ENCODE measurements at regions of chr7 and their contacts with region 1.

Region 1: GRCh38 chr7:11831736-11832495 is at the start of gene THSD7A:
- DNase-seq: peak; percentile 56
- ATAC-seq: peak; percentile 95
- H3K4me3 ChIP-seq: peak within 1 kb of the TSS; percentile 76
- H3K27ac ChIP-seq: no peak within 1 kb of the TSS
- H3K4me1 ChIP-seq: no peaks in the 10 kb centered on the region
- H3K27me3 ChIP-seq: no peaks in the 10 kb centered on the region
- CTCF ChIP-seq: no peak
- total RNA-seq, gene THSD7A: 0.04 and 0.06 TPM in 2 replicates

Region 2: GRCh38 chr7:11373546-11374142 is 458.3 kb before region 1 on chr7:
- CTCF ChIA-PET with region 1: no interaction called
- POLR2A ChIA-PET with region 1: no interaction called
- intact Hi-C with region 1: loop called (anchors 5 kb)
- DNase-seq: peak; percentile 54
- ATAC-seq: peak; percentile 62; the same call in 1 of the 2 replicates
- H3K4me3 ChIP-seq: no peak overlapping the region
- H3K27ac ChIP-seq: no peak overlapping the region
- H3K4me1 ChIP-seq: no peaks in the 10 kb centered on the region
- H3K27me3 ChIP-seq: 0 out of 2 replicates have a peak, but pooled peaks cover 12% of the 10 kb centered on the region
- CTCF ChIP-seq: peak; percentile 75

Region 3: GRCh38 chr7:11486271-11486670 is 345.6 kb before region 1 on chr7:
- CTCF ChIA-PET with region 1: no interaction called
- POLR2A ChIA-PET with region 1: no interaction called
- intact Hi-C with region 1: loop called (anchors 2 kb)
- DNase-seq: peak; percentile 23
- ATAC-seq: peak; percentile 27; the same call in 1 of the 2 replicates
- H3K4me3 ChIP-seq: no peak overlapping the region
- H3K27ac ChIP-seq: no peak overlapping the region
- H3K4me1 ChIP-seq: no peaks in the 10 kb centered on the region
- H3K27me3 ChIP-seq: no peaks in the 10 kb centered on the region
- CTCF ChIP-seq: peak; percentile 47; the same call in 1 of the 2 replicates

Region 4: GRCh38 chr7:11748899-11749298 is 83.0 kb before region 1 on chr7:
- CTCF ChIA-PET with region 1: no interaction called
- POLR2A ChIA-PET with region 1: no interaction called
- intact Hi-C with region 1: loop called (anchors 5 kb)
- DNase-seq: peak; percentile 3
- ATAC-seq: no peak
- H3K4me3 ChIP-seq: no peak overlapping the region
- H3K27ac ChIP-seq: no peak overlapping the region
- H3K4me1 ChIP-seq: peaks cover 39% of the 10 kb centered on the region
- H3K27me3 ChIP-seq: no peaks in the 10 kb centered on the region
- CTCF ChIP-seq: 0 out of 2 replicates have a peak, but pooled peaks have one; percentile 19

Region 5: GRCh38 chr7:12211054-12211710 is 379.3 kb after region 1 on chr7 and contains the start of gene TMEM106B:
- CTCF ChIA-PET with region 1: no interaction called
- POLR2A ChIA-PET with region 1: no interaction called
- intact Hi-C with region 1: loop called (anchors 5 kb)
- DNase-seq: peak; percentile 97
- ATAC-seq: peak; percentile 87
- H3K4me3 ChIP-seq: peak within 1 kb of the TSS; percentile 80
- H3K27ac ChIP-seq: peak within 1 kb of the TSS; percentile 70
- H3K4me1 ChIP-seq: peaks cover 36% of the 10 kb centered on the region
- H3K27me3 ChIP-seq: no peaks in the 10 kb centered on the region
- CTCF ChIP-seq: peak; percentile 39; the same call in 1 of the 2 replicates
- total RNA-seq, gene TMEM106B: 32.5 and 41.6 TPM in 2 replicates

Region 6: DNA sequence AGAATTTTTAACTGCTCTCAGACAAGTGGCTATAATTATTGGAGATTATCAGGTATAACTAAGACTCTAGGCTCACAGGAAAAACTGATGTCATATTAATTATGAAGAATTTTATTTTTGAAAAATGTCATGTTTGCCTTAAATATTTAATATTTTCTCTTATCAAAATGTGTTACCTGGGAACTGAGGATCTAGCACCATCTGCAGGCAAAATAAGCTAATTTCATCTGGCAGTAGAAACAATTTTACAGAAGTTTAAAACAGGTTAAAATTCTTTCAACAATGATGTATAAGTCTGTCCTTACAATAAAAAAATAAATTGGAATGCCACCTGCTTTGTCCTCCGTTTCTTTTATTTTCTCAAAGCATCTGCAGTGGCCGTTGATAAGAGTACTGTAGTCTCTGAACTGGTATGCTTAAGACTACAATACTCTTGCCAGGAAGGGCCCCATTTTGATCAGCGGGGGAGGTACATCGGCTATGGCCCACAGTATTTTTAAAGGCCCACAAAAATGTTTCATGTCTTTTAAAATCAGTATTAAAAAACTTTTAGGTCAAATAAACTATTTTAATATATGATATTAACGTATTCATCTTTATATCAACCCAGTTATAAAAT is 490.5 kb after region 1 on chr7:
- CTCF ChIA-PET with region 1: interaction called, 8 read pairs
- POLR2A ChIA-PET with region 1: no interaction called
- intact Hi-C with region 1: loop called (anchors 1 kb)
- DNase-seq: peak; percentile 56
- ATAC-seq: peak; percentile 57
- H3K4me3 ChIP-seq: no peak overlapping the region
- H3K27ac ChIP-seq: no peak overlapping the region
- H3K4me1 ChIP-seq: peaks cover 12% of the 10 kb centered on the region
- H3K27me3 ChIP-seq: no peaks in the 10 kb centered on the region
- CTCF ChIP-seq: peak; percentile 86

Measured in PC-3 (cell line).